ENCODE measurements at regions of chr12 and their contacts with region 1.

Region 1: GRCh38 chr12:57822392-57823130 is 4.0 kb upstream of the AVIL start:
- DNase-seq: no peak
- ATAC-seq: no peak
- H3K4me3 ChIP-seq: no peak overlapping the region
- H3K27ac ChIP-seq: no peak overlapping the region
- H3K4me1 ChIP-seq: no peaks in the 10 kb centered on the region
- CTCF ChIP-seq: no peak
- EP300 ChIP-seq: no peak
- POLR2A ChIP-seq: no peak
- RAD21 ChIP-seq: no peak

Region 2: GRCh38 chr12:57744777-57745484 is 77.6 kb before region 1 on chr12 and contains the start of gene TSPAN31:
- CTCF ChIA-PET with region 1: no interaction called
- POLR2A ChIA-PET with region 1: no interaction called
- DNase-seq: peak; percentile 96 to 99
- ATAC-seq: peak; percentile 84 to 93
- H3K4me3 ChIP-seq: peak within 1 kb of the TSS; percentile 70
- H3K27ac ChIP-seq: peak within 1 kb of the TSS; percentile 93 to 98
- H3K4me1 ChIP-seq: peaks cover 13% of the 10 kb centered on the region; the same call in 2 of the 3 replicates
- CTCF ChIP-seq: no peak
- EP300 ChIP-seq: no peak
- POLR2A ChIP-seq: peak; percentile 34; the same call in 1 of the 2 replicates
- RAD21 ChIP-seq: no peak
- polyA plus RNA-seq, gene TSPAN31: 51.9 and 61.0 TPM in 2 replicates

Region 3: GRCh38 chr12:57803319-57803893 is 19.2 kb before region 1 on chr12:
- CTCF ChIA-PET with region 1: interaction called, 40 read pairs
- POLR2A ChIA-PET with region 1: no interaction called
- DNase-seq: peak; percentile 53 to 69
- ATAC-seq: peak; percentile 86 to 91
- H3K4me3 ChIP-seq: no peak overlapping the region
- H3K27ac ChIP-seq: no peak overlapping the region
- H3K4me1 ChIP-seq: no peaks in the 10 kb centered on the region
- CTCF ChIP-seq: peak; percentile 70
- EP300 ChIP-seq: no peak
- POLR2A ChIP-seq: no peak
- RAD21 ChIP-seq: peak; percentile 61 to 63

Region 4: GRCh38 chr12:58046271-58046670 is 223.7 kb after region 1 on chr12:
- CTCF ChIA-PET with region 1: no interaction called
- POLR2A ChIA-PET with region 1: no interaction called
- DNase-seq: no peak
- ATAC-seq: no peak
- H3K4me3 ChIP-seq: no peak overlapping the region
- H3K27ac ChIP-seq: no peak overlapping the region
- H3K4me1 ChIP-seq: no peaks in the 10 kb centered on the region
- CTCF ChIP-seq: no peak
- EP300 ChIP-seq: no peak
- POLR2A ChIP-seq: no peak
- RAD21 ChIP-seq: no peak

Region 5: GRCh38 chr12:58105225-58106119 is 282.9 kb after region 1 on chr12:
- CTCF ChIA-PET with region 1: no interaction called
- POLR2A ChIA-PET with region 1: no interaction called
- DNase-seq: peak; percentile 10 to 14
- ATAC-seq: peak; percentile 51 to 56; a peak in 2 of 6 replicates
- H3K4me3 ChIP-seq: no peak overlapping the region
- H3K27ac ChIP-seq: no peak overlapping the region
- H3K4me1 ChIP-seq: no peaks in the 10 kb centered on the region
- CTCF ChIP-seq: no peak; the same call in 2 of the 3 replicates
- EP300 ChIP-seq: no peak
- POLR2A ChIP-seq: no peak
- RAD21 ChIP-seq: peak in 1 of 2 experiments; percentile 24; a peak in 2 of 5 replicates

Measured in A549 (cell line).